ENCODE measurements at regions of chr2 and their contacts with region 1.

Region 1: GRCh38 chr2:190376591-190377245 is 31.4 kb upstream of the MFSD6 start:
- DNase-seq: no peak
- H3K4me3 ChIP-seq: no peak overlapping the region
- H3K4me3 Mint-ChIP-seq: no peak overlapping the region
- H3K27ac Mint-ChIP-seq: no peak overlapping the region
- H3K4me1 ChIP-seq: peaks cover 8% of the 10 kb centered on the region
- H3K4me1 Mint-ChIP-seq: peaks cover 7% of the 10 kb centered on the region
- H3K27me3 ChIP-seq: no peaks in the 10 kb centered on the region
- H3K27me3 Mint-ChIP-seq: no peaks in the 10 kb centered on the region
- CTCF ChIP-seq: no peak

Region 2: GRCh38 chr2:190328573-190329147 is 48.1 kb before region 1 on chr2:
- CTCF ChIA-PET with region 1: no interaction called
- POLR2A ChIA-PET with region 1: no interaction called
- intact Hi-C with region 1: loop called (anchors 1 kb)
- DNase-seq: no peak
- H3K4me3 ChIP-seq: no peak overlapping the region
- H3K4me3 Mint-ChIP-seq: no peak overlapping the region
- H3K27ac Mint-ChIP-seq: no peak overlapping the region
- H3K4me1 ChIP-seq: peaks cover 2% of the 10 kb centered on the region
- H3K4me1 Mint-ChIP-seq: no peaks in the 10 kb centered on the region
- H3K27me3 ChIP-seq: no peaks in the 10 kb centered on the region
- H3K27me3 Mint-ChIP-seq: no peaks in the 10 kb centered on the region
- CTCF ChIP-seq: peak in 1 of 2 experiments; percentile 35

Region 3: GRCh38 chr2:190343500-190344275 is 33.0 kb before region 1 on chr2 and contains the start of gene INPP1:
- CTCF ChIA-PET with region 1: no interaction called
- POLR2A ChIA-PET with region 1: no interaction called
- intact Hi-C with region 1: loop called (anchors 1 kb)
- DNase-seq: peak; percentile 63 to 71
- H3K4me3 ChIP-seq: peak within 1 kb of the TSS; percentile 76
- H3K4me3 Mint-ChIP-seq: peak within 1 kb of the TSS; percentile 95
- H3K27ac Mint-ChIP-seq: peak within 1 kb of the TSS; percentile 91
- H3K4me1 ChIP-seq: no peaks in the 10 kb centered on the region
- H3K4me1 Mint-ChIP-seq: no peaks in the 10 kb centered on the region
- H3K27me3 ChIP-seq: no peaks in the 10 kb centered on the region
- H3K27me3 Mint-ChIP-seq: no peaks in the 10 kb centered on the region
- CTCF ChIP-seq: no peak
- total RNA-seq, gene INPP1: 23.2 TPM in 2 replicates